Activated CD8-positive, alpha-beta memory T cell treated with anti-CD3 and anti-CD28 coated beads, Interleukin-2, amount 10 ng/mL, durations not matched to agents 7 days and 5 days (primary cell): ENCODE measurements at regions of chr20 and their contacts with region 1.

Region 1: DNA sequence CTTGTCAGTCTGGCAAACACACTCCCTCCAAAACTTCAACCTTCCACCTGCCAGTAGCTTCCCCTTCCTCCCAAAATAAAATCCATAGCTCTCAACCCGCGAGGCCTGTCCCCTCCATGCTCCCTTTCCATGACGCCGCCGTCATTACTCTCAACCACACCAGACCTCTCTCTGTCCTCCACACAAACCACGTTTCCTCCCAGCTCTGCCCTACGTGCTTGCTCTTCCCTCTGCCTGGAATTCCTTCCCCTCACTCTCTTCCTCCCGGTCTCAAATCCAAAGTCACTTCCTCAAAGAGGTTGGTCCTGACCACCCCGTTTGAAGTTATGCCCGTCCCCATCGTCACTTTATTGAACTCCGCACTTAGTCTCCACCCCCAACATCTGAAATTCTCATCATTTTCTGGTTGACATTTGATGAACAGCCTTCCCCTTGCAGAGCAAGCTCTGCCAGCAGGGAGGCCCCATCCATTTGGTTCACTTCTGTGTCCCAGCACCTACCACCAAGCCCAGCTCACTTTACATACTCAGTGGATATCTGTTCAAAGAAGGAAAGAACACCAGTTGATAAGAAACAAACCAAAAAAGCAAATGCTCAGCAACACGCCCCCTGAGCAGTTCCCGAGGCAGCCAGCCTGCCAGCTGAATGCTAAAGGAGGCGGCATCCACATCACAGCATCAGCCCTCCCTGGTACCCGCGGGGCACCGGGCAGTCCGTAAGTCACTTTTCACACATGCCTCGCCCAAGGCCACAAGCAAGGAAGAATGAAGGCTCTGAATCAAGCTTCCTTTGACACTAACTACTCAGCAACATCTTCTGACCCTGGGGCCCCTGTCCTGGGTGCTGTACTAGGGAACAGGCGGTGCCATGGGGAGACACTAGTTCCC is 125.0 kb downstream of the NFATC2 start:
- DNase-seq: no peak
- ATAC-seq: no peak
- H3K4me3 Mint-ChIP-seq: peak overlapping the region; percentile 11
- H3K27ac Mint-ChIP-seq: peak overlapping the region; percentile 88
- H3K4me1 Mint-ChIP-seq: peaks cover 86% of the 10 kb centered on the region
- H3K27me3 Mint-ChIP-seq: no peaks in the 10 kb centered on the region

Region 2: GRCh38 chr20:51404298-51405060 is 13.0 kb before region 1 on chr20:
- CTCF ChIA-PET with region 1: interaction called, 48 read pairs
- DNase-seq: peak; percentile 98
- ATAC-seq: peak; percentile 85
- H3K4me3 Mint-ChIP-seq: no peak overlapping the region
- H3K27ac Mint-ChIP-seq: peak overlapping the region; percentile 99
- H3K4me1 Mint-ChIP-seq: peaks cover 95% of the 10 kb centered on the region
- H3K27me3 Mint-ChIP-seq: no peaks in the 10 kb centered on the region

Region 3: GRCh38 chr20:51445591-51445990 is 28.1 kb after region 1 on chr20:
- CTCF ChIA-PET with region 1: no interaction called
- DNase-seq: no peak
- ATAC-seq: no peak
- H3K4me3 Mint-ChIP-seq: no peak overlapping the region
- H3K27ac Mint-ChIP-seq: peak overlapping the region; percentile 51
- H3K4me1 Mint-ChIP-seq: peaks cover 57% of the 10 kb centered on the region
- H3K27me3 Mint-ChIP-seq: no peaks in the 10 kb centered on the region